ENCODE measurements at regions of chr2 and their contacts with region 1.

Region 1: DNA sequence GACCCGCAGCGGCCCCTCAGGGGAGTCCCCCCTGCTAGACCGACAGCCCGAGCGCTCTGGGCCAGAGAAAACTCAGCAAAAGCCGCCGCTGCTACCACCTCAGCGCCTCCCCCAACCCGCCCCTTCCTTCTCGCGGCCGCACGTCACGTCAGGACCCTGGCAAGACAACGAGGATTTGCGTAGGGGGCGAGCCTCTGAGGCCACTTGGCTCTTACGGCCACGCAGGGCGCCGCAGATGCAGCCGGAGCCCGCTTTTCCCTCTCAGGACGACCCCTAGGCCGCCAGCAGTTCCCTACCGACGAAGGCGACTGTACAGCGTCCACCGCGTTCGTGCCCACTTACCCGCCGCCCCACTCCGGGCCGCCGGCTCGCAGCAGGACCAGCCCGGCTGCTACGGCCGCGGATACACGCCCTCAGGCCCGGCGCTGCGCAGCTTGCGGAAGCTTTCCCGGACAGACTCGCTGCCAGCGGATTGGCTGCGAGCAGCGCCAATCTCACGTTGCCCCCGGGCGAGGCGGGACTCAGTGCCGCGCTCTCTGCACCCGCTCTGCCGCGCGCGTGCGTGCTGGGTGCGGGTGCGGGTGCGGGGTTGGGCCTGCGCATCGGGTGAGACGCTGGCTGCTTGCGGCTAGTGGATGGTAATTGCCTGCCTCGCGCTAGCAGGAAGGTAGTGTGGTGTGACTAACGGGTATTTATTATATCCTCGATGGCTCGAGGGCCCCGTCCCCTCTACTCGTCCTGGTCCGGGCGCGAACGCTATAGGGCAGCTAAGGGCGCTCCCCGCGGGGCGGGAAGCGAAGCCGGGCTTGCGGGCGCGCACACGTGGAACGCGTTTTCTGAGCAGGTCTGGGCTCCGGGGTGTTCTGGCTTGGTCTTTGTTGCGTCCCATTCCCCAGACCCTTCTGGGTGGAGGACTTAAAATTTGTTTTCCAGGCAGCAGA is at the starts of genes ORMDL1 and PMS1:
- DNase-seq: peak; percentile 97
- H3K4me3 ChIP-seq: peak within 1 kb of the TSS; percentile 64 to 85 (median 75)
- H3K27ac ChIP-seq: peak within 1 kb of the TSS; percentile 88 to 98 (median 94)
- H3K4me1 ChIP-seq: peaks cover 0 to 35% (median 32%) of the 10 kb centered on the region in 4 donors
- H3K27me3 ChIP-seq: no peaks in the 10 kb centered on the region
- CTCF ChIP-seq: no peak
- EP300 ChIP-seq: no peak
- POLR2A ChIP-seq: peak; percentile 74 to 75
- total RNA-seq, gene ORMDL1: 56.3 to 83.9 (median 64.0) TPM
- total RNA-seq, gene PMS1: 15.1 to 17.7 (median 17.5) TPM

Region 2: GRCh38 chr2:189762551-189763298 is 21.5 kb before region 1 on chr2 and contains the start of gene OSGEPL1:
- intact Hi-C with region 1: loop called (anchors 2 kb)
- DNase-seq: peak; percentile 96
- H3K4me3 ChIP-seq: peak within 1 kb of the TSS; percentile 64 to 74 (median 71)
- H3K27ac ChIP-seq: peak within 1 kb of the TSS; percentile 88 to 93 (median 89)
- H3K4me1 ChIP-seq: peaks cover 0 to 13% (median 9%) of the 10 kb centered on the region in 4 donors
- H3K27me3 ChIP-seq: no peaks in the 10 kb centered on the region
- CTCF ChIP-seq: peak in 2 of 4 experiments; percentile 30 to 33
- EP300 ChIP-seq: no peak
- POLR2A ChIP-seq: no peak
- total RNA-seq, gene OSGEPL1: 5.2 to 10.0 (median 6.7) TPM

Measured in sigmoid colon (tissue), 7 donors.